Activated T-helper 1 cell treated with anti-CD3 and anti-CD28 coated beads, Interleukin-12 subunit alpha, Interleukin-12 subunit beta, Interleukin-2, Interleukin-4 antibody, amounts not matched to agents 30 ng/mL and 10 ng/mL and 1 ng/mL, durations not matched to agents 14 hours and 24 hours and 36 hours (primary cell): ENCODE measurements at regions of chr2 and their contacts with region 1.

Region 1: GRCh38 chr2:151409601-151410484 is at the start of gene RIF1:
- DNase-seq: peak; percentile 68
- H3K4me3 Mint-ChIP-seq: peak within 1 kb of the TSS; percentile 95
- H3K27ac Mint-ChIP-seq: peak within 1 kb of the TSS; percentile 92
- H3K4me1 Mint-ChIP-seq: peaks cover 20% of the 10 kb centered on the region
- H3K27me3 Mint-ChIP-seq: peaks cover 3% of the 10 kb centered on the region
- total RNA-seq, gene RIF1: 82.4 and 82.7 TPM in 2 replicates

Region 2: GRCh38 chr2:151261231-151261976 is 148.4 kb before region 1 on chr2 and contains the start of gene RBM43:
- intact Hi-C with region 1: loop called (anchors 1 kb)
- DNase-seq: peak; percentile 85
- H3K4me3 Mint-ChIP-seq: peak within 1 kb of the TSS; percentile 93
- H3K27ac Mint-ChIP-seq: peak within 1 kb of the TSS; percentile 98
- H3K4me1 Mint-ChIP-seq: peaks cover 18% of the 10 kb centered on the region
- H3K27me3 Mint-ChIP-seq: peaks cover 2% of the 10 kb centered on the region
- total RNA-seq, gene RBM43: 1.9 and 2.9 TPM in 2 replicates

Region 3: GRCh38 chr2:151422917-151423439 is 13.1 kb after region 1 on chr2:
- intact Hi-C with region 1: loop called (anchors 1 kb)
- DNase-seq: no peak
- H3K4me3 Mint-ChIP-seq: no peak overlapping the region
- H3K27ac Mint-ChIP-seq: peak overlapping the region; percentile 74
- H3K4me1 Mint-ChIP-seq: peaks cover 29% of the 10 kb centered on the region
- H3K27me3 Mint-ChIP-seq: no peaks in the 10 kb centered on the region